Breast epithelium (tissue), 4 donors: ENCODE measurements at regions of chr10 and their contacts with region 1.

Region 1: DNA sequence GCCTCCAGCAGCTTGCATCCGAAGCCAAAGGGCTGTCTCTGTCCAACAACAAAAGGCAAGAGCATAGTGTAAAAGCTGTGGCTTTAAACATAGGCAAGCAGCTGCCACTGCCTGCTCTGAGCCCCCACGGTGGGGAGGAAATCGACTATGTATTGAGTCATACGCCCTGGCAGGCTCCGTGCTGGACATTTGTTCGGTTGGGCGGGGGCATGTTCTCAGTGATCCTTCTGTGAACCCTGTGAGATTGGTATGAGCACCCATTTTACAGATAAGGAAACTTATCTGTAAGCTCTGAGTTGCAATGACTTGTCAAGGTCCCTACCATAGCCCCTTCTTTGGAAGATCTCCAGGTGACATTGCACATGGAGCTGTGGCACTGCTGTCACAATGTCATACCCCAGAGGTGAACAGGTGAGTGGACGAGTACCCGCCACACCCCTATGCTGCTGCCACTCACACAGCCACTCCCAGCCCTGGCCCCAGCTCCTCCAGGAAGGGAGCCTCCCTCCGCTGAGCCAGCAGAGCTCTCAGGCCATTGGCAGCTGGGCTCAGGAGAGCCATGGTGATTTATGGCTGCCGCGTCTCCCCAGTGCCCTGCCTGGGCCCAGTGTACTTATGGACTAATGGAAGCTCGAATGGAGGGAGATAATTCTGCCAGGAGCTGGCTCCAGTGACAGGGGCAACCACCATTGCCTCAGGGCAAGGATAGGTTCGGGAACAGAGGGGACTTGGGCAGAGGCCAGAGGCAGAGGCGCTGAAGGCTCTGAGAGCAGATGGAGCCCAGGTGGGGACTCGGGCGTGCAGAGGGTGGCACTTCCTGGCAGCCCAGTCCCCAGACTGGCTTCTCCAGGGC is 43.7 kb downstream of the UNC5B start:
- DNase-seq: no peak
- H3K4me3 ChIP-seq: no peak overlapping the region
- H3K27ac ChIP-seq: no peak overlapping the region
- H3K4me1 ChIP-seq: peaks cover 8 to 18% of the 10 kb centered on the region in 2 donors
- H3K27me3 ChIP-seq: no peaks in the 10 kb centered on the region
- CTCF ChIP-seq: no peak
- POLR2A ChIP-seq: no peak

Region 2: DNA sequence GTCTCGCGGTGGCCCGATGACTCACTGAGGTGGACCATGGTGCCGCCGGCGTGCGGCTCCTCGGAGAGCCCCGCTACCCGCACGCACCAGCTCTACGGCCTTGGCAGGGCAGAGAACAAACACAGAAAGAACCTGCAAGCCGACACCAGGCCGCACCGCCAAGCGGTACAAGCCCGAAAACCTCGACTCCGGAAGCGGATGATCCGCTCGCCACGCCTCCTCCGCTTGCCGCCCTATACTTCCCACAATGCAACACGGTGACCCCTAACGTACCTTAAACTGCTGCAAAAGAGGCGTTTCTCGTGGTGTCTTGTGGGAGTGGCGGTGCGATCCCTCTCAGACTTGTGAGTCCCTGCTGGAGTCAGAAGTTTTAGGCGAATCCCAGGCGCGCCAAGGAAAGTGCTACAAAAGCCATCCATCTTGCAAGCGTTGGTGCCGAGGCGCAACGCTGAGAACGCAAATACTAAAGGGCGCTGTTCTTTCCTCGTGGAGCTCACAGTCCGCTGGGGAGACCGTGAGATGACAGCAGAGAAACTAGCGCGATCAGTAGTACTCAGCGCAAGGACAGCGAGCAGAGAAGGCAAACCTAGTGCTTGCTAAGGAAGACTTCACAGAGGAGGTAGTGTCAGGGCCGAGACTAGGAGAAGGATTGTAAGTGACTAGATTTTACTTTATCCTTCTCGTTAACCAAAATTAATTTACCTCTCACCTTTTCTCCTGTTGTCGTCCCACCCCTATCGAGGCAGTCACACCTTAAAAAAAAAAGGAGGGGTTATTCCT is 1996.6 kb after region 1 on chr10 and contains the start of gene MRPS16:
- intact Hi-C with region 1: loop called (anchors 5 kb)
- DNase-seq: peak; percentile 90 to 96
- H3K4me3 ChIP-seq: peak within 1 kb of the TSS; percentile 61 to 96 (median 78)
- H3K27ac ChIP-seq: peak within 1 kb of the TSS; percentile 93
- H3K4me1 ChIP-seq: no peaks in the 10 kb centered on the region
- H3K27me3 ChIP-seq: no peaks in the 10 kb centered on the region
- CTCF ChIP-seq: peak in 1 of 3 donors; percentile 13
- POLR2A ChIP-seq: peak; percentile 45
- total RNA-seq, gene MRPS16: 33.3 to 40.6 (median 40.4) TPM